Ovary (tissue), 10 donors: ENCODE measurements at regions of chr18 and their contacts with region 1.

Region 1: GRCh38 chr18:864872-865273 is 39.8 kb upstream of the ADCYAP1 start:
- DNase-seq: peak; percentile 27 to 67 (median 62)
- H3K4me3 ChIP-seq: no peak overlapping the region
- H3K27ac ChIP-seq: no peak overlapping the region
- H3K4me1 ChIP-seq: no peaks in the 10 kb centered on the region
- H3K27me3 ChIP-seq: no peaks in the 10 kb centered on the region
- CTCF ChIP-seq: peak; percentile 56 to 75 (median 61)
- EP300 ChIP-seq: no peak
- POLR2A ChIP-seq: no peak

Region 2: DNA sequence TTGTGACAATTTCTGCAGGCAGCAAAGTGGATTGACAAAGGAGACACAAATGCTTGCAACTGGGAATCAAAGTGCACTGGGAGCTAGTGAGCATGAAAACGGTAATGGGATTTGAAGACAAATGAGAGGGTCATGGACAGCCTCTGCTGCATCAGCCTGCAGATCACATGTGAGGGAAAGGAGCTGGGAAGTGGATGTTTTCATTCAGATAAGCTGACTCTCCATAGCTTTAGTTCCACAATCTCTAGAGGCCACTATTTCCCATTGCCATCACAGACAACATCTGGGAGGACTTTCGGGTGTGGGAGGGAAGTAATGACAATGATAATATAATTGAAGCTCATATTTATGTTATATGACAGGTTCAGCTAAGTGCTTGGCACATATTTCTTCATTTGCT is 68.2 kb after region 1 on chr18:
- intact Hi-C with region 1: no loop called
- DNase-seq: no peak
- H3K4me3 ChIP-seq: no peak overlapping the region
- H3K27ac ChIP-seq: no peak overlapping the region
- H3K4me1 ChIP-seq: no peaks in the 10 kb centered on the region
- H3K27me3 ChIP-seq: no peaks in the 10 kb centered on the region
- CTCF ChIP-seq: no peak
- EP300 ChIP-seq: no peak
- POLR2A ChIP-seq: no peak

Region 3: GRCh38 chr18:944440-944839 is 79.6 kb after region 1 on chr18:
- intact Hi-C with region 1: no loop called
- DNase-seq: no peak
- H3K4me3 ChIP-seq: no peak overlapping the region
- H3K27ac ChIP-seq: no peak overlapping the region
- H3K4me1 ChIP-seq: no peaks in the 10 kb centered on the region
- H3K27me3 ChIP-seq: no peaks in the 10 kb centered on the region
- CTCF ChIP-seq: no peak
- EP300 ChIP-seq: no peak
- POLR2A ChIP-seq: no peak

Region 4: DNA sequence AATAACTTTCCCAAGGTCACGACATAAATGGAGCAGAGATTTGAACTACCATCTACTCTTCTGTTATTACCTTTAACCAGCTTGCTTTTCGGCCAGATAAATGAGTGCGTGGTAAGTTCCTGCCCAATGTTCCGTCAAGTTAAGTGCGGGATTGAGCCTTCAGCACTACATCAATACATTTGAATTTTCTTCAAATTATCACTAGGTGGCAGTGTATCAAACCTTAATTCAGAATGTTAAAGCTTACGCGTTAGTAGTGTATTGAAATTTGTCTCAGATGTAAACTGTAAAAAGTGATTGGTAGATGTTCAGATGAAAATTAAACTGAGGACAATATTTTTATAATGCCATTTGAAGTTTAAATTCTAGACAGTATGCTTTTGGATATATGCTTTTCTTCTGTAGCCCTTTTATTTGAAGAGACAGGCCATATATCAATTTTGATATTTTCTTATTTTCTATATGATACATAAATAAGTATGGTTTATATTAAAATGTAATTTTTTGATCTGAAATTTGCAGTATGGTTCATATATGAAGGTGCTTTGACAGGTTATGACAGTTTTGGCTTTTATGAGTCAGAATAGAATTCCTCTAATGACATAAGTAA is 721.1 kb after region 1 on chr18:
- intact Hi-C with region 1: loop called in 1 of 4 experiments (anchors 10 kb)
- DNase-seq: no peak
- H3K4me3 ChIP-seq: no peak overlapping the region
- H3K27ac ChIP-seq: no peak overlapping the region
- H3K4me1 ChIP-seq: no peaks in the 10 kb centered on the region
- H3K27me3 ChIP-seq: no peaks in the 10 kb centered on the region
- CTCF ChIP-seq: no peak
- EP300 ChIP-seq: no peak
- POLR2A ChIP-seq: no peak

Region 5: GRCh38 chr18:2547477-2548087 is 1682.7 kb after region 1 on chr18:
- intact Hi-C with region 1: loop called in 2 of 4 experiments (anchors 10 kb)
- DNase-seq: no peak
- H3K4me3 ChIP-seq: no peak overlapping the region
- H3K27ac ChIP-seq: no peak overlapping the region
- H3K4me1 ChIP-seq: no peaks in the 10 kb centered on the region
- H3K27me3 ChIP-seq: no peaks in the 10 kb centered on the region
- CTCF ChIP-seq: peak in 2 of 3 donors; percentile 18 to 27
- EP300 ChIP-seq: no peak
- POLR2A ChIP-seq: no peak